Dorsolateral prefrontal cortex (tissue), 120 donors: ENCODE measurements at regions of chr16 and their contacts with region 1.

Region 1: GRCh38 chr16:52456368-52456767 is 90.6 kb downstream of the TOX3 start:
- DNase-seq: peak in 2 of 10 donors; percentile 21 to 22
- H3K4me3 ChIP-seq: no peak overlapping the region
- H3K27ac ChIP-seq: peak overlapping the region in 47 of 59 donors; percentile 4 to 91 (median 68)
- H3K27me3 ChIP-seq: peaks cover 0 to 3% (median 0%) of the 10 kb centered on the region in 45 donors
- CTCF ChIP-seq: no peak

Region 2: DNA sequence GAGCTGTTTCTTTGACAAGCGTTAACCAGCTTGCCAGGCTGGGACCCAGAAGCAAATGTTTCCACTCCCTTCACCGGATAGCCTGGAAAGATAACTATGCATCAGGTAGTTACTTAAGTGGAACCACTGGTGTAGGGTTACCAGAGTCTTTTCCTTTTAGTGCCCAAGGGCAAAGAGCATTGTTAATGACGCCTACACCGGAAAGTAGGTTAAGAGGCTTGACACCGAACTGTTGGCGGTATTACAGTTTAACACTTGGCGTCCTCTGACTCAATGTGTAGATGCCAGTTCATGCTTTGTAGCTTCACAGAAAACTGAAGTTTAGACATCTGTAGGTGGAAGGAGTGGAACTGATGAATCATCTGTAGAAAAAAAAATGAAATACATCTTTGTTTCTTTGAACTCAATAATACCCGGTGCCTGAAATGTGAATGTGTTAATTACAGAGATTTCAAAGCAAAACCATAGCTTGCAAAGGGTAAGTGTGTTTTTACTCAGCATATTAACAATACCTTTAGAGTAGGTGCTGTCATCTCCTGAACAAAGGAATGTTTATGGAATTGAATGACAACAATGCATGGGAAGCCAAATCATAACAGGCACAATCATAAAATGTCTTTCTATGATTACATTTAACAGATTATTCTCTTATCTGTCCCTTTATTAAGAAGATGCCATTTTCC is 878.6 kb before region 1 on chr16:
- intact Hi-C with region 1: no loop called
- DNase-seq: no peak
- H3K4me3 ChIP-seq: no peak overlapping the region
- H3K27ac ChIP-seq: no peak overlapping the region
- H3K27me3 ChIP-seq: peaks cover 0 to 10% (median 0%) of the 10 kb centered on the region in 45 donors
- CTCF ChIP-seq: no peak

Region 3: DNA sequence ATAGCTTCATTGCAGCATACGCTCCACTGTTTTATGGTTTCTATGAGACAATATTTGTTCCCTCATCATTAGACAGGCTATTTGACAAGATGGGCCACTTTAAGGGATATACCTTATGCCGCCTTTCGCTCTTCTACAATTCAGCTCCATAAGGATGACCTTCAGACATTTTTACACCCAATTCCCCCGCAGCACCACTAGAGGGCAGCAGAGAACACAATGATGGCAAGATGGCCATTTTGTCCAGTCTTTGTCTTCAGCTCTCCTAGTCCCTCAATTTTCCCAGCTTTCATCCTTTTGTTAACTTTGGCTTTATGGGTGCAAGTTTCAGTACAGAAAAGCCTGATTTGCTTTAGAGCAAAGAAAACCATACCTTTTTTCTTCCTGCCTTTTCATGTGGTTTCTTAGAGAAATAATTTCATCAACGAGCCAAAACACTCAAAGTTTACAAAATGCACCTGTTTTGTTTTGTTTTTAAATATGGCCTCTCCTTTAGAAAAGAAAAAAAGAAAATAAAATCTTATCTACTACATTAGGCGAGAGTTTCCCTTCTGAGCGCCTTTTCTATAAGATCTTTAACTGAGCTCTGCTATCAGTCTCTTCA is 264.7 kb before region 1 on chr16:
- intact Hi-C with region 1: no loop called
- DNase-seq: peak; percentile 53 to 88 (median 63)
- H3K4me3 ChIP-seq: no peak overlapping the region
- H3K27ac ChIP-seq: no peak overlapping the region
- H3K27me3 ChIP-seq: no peaks in the 10 kb centered on the region
- CTCF ChIP-seq: peak; percentile 84 to 99 (median 94)

Region 4: GRCh38 chr16:52389045-52389444 is 67.3 kb before region 1 on chr16:
- intact Hi-C with region 1: no loop called
- DNase-seq: no peak
- H3K4me3 ChIP-seq: no peak overlapping the region
- H3K27ac ChIP-seq: no peak overlapping the region
- H3K27me3 ChIP-seq: peaks cover 0 to 9% (median 0%) of the 10 kb centered on the region in 45 donors
- CTCF ChIP-seq: no peak

Region 5: DNA sequence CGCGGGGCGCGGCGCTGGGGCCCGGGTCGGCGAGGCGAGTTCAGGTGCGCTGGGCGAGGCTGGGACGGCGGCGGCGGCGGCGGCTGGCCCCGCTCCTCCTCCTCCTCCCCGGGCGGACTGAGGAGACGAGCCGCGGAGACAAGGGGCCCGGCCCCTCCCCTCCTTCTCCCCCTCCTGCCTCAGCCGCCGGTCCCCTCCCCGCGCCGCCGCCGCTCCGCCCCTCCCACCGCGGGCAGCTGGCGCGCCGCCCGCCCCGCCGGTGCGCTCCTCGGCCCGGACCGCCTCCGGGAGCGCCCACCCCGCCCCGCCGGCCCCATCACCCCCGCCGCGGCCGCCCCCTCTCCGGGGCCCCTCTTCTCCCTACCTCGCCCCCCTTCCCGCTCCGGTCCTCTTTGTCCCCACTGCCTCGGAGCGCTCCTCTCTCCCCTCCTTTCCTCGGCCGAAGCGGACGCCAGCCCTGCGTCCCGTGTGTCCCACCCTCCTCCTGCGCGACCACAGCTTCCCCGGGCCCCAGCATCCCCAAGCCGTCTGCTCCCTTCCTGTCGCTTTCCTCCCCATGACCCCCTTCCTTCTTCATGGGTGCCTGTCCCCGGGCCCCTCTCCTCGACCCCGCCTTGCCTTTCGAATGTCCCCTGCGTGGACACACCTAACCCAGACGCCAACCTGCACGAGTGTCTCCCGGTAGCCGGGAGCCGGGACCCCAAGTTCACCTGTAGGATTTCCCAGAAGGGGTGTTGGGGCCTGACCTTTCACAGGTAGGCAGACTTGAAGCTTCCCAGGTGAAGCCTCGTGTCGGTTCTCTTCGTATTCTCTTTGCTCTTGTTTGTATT is 90.9 kb after region 1 on chr16 and contains the start of gene TOX3:
- intact Hi-C with region 1: loop called in 1 of 2 experiments (anchors 10 kb)
- DNase-seq: peak in 2 of 10 donors; percentile 46 to 52
- H3K4me3 ChIP-seq: peak within 1 kb of the TSS; percentile 39 to 79 (median 62)
- H3K27ac ChIP-seq: peak within 1 kb of the TSS in 24 of 59 donors; percentile 2 to 72 (median 32)
- H3K27me3 ChIP-seq: peaks cover 0 to 54% (median 30%) of the 10 kb centered on the region in 45 donors
- CTCF ChIP-seq: no peak
- total RNA-seq, gene TOX3: 2.1 to 13.9 (median 6.0) TPM

Region 6: DNA sequence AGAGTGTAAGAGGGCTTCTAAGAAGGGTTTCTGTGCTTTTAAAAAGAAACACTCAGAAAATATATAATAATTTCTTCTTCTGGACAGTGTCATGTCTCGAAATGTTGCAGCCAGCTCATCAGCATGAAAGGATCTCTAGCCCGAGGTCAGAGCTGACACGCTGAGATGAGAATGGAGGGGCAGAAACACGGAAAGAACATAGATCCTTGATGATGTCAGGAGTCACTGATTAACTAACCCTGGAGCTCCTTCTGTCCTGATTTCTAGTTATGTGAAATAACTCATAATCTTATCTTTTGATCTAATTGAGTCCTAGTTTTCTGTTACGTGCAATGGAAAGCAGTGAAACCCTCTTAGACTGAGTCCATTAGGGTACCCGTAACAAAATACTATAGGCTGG is 100.9 kb after region 1 on chr16:
- intact Hi-C with region 1: no loop called
- DNase-seq: no peak
- H3K4me3 ChIP-seq: no peak overlapping the region
- H3K27ac ChIP-seq: no peak overlapping the region
- H3K27me3 ChIP-seq: peaks cover 0 to 16% (median 0%) of the 10 kb centered on the region in 45 donors
- CTCF ChIP-seq: no peak